PC-9 (cell line): ENCODE measurements at regions of chr16 and their contacts with region 1.

Region 1: GRCh38 chr16:30628627-30629540 is 18.7 kb upstream of the ZNF689 start:
- DNase-seq: peak; percentile 60 to 89
- H3K4me3 ChIP-seq: peak overlapping the region; percentile 33; the same call in 1 of the 2 replicates
- H3K27ac ChIP-seq: no peak overlapping the region
- H3K4me1 ChIP-seq: peaks cover 10% of the 10 kb centered on the region; the same call in 1 of the 2 replicates
- H3K27me3 ChIP-seq: no peaks in the 10 kb centered on the region
- CTCF ChIP-seq: peak; percentile 96

Region 2: DNA sequence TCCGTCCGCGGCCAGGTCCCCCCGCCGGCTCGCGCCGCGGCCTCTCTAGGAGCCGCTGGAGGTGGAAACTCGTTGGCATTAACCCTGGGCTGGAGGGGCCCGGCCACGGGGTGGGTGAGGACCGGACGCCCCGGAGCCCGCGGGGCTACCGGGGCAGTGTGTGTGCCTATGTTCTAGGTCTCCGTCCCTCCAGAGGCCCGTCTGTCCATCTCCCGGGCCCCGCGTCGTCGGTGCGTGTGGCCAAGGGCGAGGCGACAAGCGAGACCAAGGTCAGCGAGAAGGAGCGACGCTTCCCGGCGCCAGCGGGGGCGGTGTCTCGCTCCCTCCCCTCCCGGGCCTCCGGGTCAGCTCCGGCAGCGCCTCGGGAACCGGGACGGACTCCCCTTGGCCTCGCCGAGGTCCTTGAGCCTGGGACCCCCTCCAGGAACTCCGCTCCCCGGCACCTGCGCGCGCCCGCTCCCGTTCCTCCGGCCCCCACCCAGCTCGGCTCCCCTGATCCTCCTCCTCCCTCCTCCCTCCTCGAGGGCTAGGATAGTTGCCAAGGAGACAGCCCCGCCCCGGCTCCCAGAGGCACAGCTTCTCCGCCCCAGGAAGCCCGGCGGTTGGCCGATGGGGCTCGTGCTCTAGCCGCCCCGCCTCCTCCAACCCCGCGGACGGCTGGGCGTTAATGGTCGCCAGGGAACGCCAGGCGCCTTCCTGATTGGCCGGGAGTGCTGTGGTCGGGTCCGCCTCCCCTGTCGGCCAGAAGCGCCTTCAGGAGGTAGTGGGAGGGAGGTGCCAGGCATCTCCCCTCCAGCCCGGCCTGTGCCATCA is 101.9 kb before region 1 on chr16:
- CTCF ChIA-PET with region 1: no interaction called
- POLR2A ChIA-PET with region 1: no interaction called
- intact Hi-C with region 1: loop called (anchors 2 kb)
- DNase-seq: peak; percentile 94 to 100
- H3K4me3 ChIP-seq: peak overlapping the region; percentile 97
- H3K27ac ChIP-seq: peak overlapping the region; percentile 79
- H3K4me1 ChIP-seq: peaks cover 32% of the 10 kb centered on the region
- H3K27me3 ChIP-seq: no peaks in the 10 kb centered on the region
- CTCF ChIP-seq: peak; percentile 50; the same call in 1 of the 2 replicates

Region 3: DNA sequence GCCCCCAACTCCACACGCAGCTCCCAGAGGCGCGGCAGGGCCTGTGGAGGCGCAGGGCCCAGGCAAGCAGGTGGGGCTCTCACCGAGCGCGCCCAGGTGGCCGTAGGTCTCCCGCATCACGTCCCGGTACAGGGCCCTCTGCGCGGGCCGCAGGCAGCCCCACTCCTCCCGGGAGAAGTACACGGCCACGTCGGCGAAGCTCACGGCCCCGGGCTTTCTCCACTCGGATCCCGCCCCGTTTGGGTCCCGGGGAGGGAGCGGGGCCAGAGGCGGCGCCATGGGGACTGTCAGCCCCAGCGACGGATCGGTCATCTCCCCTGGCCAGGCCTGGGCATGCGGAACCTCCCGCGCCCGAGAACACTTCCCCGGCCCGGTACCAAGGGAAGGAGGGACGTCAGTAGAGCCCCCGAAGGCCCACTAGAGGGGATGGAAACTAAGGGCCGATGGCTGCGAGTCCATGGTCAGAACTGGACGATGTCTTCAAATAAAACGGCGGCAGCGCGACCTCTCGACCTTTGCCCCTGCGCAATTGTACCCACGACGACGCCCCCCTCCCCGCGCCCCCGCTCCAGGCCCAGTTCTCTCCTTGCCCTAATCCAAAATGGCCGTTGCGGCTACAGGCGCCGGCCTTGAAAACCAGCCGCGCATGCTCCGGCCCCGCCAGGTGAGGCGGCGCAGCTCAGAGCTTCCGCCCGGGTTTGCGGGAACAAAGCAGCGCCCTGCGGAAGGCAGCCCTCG is 94.3 kb before region 1 on chr16 and contains the start of gene ZNF747:
- CTCF ChIA-PET with region 1: interaction called, 4 read pairs
- POLR2A ChIA-PET with region 1: interaction called, 3 read pairs
- intact Hi-C with region 1: loop called (anchors 2 kb)
- DNase-seq: peak; percentile 72 to 92
- H3K4me3 ChIP-seq: peak within 1 kb of the TSS; percentile 73
- H3K27ac ChIP-seq: peak within 1 kb of the TSS; percentile 57
- H3K4me1 ChIP-seq: peaks cover 30% of the 10 kb centered on the region
- H3K27me3 ChIP-seq: no peaks in the 10 kb centered on the region
- CTCF ChIP-seq: peak; percentile 29; the same call in 1 of the 2 replicates
- total RNA-seq, gene ZNF747: 14.5 and 17.9 TPM in 2 replicates

Region 4: DNA sequence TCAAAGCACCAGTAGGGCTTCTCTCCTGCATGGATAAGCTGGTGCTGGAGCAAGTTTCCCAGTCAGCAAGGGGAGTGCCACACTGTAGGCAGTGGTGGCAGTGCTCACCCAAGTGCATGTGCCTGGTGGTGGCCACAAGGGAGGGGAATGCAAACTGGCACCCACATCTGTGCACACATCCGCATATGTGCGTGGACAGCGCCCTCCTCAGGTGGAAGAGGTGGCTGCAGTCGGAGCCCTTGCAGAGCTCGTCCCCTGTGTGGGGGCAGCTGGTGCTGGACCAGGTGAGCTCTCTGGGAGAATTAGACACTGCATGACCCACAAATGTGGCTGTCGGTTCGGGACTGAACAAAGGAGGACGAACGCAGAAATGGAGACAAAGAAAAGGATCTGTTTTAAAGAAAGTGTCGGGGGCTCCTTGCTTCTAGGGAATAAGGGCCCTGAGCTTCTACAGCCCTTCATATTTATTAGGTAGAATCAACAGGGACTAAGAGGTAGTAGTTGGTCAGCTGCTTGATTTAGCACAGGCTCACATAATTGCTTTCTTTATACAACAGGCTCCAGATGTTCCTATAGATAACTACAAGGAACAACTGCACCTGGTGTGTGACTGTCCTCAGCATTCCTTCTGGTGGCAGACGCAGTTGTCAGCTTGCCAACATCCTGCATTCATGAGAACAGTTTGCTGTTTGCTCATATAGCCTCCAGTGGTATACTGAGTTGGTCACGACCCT is 13.4 kb before region 1 on chr16:
- CTCF ChIA-PET with region 1: interaction called, 3 read pairs
- POLR2A ChIA-PET with region 1: interaction called, 11 read pairs
- intact Hi-C with region 1: no loop called
- DNase-seq: peak; percentile 57 to 77
- H3K4me3 ChIP-seq: no peak overlapping the region
- H3K27ac ChIP-seq: no peak overlapping the region
- H3K4me1 ChIP-seq: no peaks in the 10 kb centered on the region; the same call in 1 of the 2 replicates
- H3K27me3 ChIP-seq: no peaks in the 10 kb centered on the region
- CTCF ChIP-seq: peak; percentile 84